Naive thymus-derived CD4-positive, alpha-beta T cell (primary cell): ENCODE measurements at regions of chr19 and their contacts with region 1.

Region 1: DNA sequence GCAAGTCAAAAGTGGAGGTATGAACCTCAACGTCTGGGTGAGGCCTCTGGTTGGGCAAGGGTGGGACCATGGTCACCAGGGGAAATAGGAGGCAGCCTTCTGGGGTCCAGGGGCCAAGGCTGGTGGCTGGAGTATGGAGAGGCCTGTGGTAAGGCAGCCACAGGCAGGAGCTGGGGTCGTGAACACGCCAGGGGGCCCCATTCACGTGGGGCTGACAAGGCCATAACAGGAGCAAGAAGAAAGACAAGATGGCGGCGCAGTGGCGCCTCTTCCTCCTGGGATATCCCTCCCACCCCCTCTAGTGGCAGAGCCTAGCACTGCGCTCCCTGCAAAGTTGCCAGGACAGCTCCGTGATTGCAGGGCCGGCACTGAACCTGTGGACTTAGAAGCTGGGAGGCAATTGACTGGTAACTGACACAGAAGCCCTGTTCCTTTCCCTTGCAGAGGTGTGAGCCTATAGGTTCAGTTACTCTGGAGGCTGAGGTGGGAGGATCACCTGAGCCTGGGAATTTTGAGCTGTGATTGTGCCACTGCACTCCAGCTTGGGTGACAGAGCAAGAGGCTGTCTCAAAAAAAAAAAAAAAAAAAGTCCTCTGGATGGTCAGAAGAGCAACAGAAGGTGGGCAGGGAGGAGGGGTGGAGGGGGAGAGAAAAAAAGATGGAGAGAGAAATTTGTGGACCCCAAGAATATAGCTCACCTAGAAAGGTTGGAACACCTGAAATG is 19.7 kb upstream of the EDDM13 start:
- DNase-seq: peak; percentile 30 to 69 (median 55)
- ATAC-seq: peak; percentile 82
- H3K4me3 ChIP-seq: no peak overlapping the region
- H3K4me3 Mint-ChIP-seq: no peak overlapping the region
- H3K27ac ChIP-seq: no peak overlapping the region
- H3K27ac Mint-ChIP-seq: no peak overlapping the region
- H3K4me1 ChIP-seq: no peaks in the 10 kb centered on the region
- H3K4me1 Mint-ChIP-seq: peaks cover 0 to 8% (median 0%) of the 10 kb centered on the region in 7 donors
- H3K27me3 ChIP-seq: no peaks in the 10 kb centered on the region
- H3K27me3 Mint-ChIP-seq: no peaks in the 10 kb centered on the region

Region 2: GRCh38 chr19:55553217-55554182 is 699.4 kb before region 1 on chr19:
- CTCF ChIA-PET with region 1: no interaction called
- POLR2A ChIA-PET with region 1: no interaction called
- intact Hi-C with region 1: no loop called
- DNase-seq: no peak
- ATAC-seq: no peak
- H3K4me3 ChIP-seq: no peak overlapping the region
- H3K4me3 Mint-ChIP-seq: no peak overlapping the region
- H3K27ac ChIP-seq: no peak overlapping the region
- H3K27ac Mint-ChIP-seq: no peak overlapping the region
- H3K4me1 ChIP-seq: no peaks in the 10 kb centered on the region
- H3K4me1 Mint-ChIP-seq: peaks cover 0 to 2% (median 0%) of the 10 kb centered on the region in 7 donors
- H3K27me3 ChIP-seq: no peaks in the 10 kb centered on the region
- H3K27me3 Mint-ChIP-seq: peaks cover 0 to 14% (median 5%) of the 10 kb centered on the region in 5 donors

Region 3: DNA sequence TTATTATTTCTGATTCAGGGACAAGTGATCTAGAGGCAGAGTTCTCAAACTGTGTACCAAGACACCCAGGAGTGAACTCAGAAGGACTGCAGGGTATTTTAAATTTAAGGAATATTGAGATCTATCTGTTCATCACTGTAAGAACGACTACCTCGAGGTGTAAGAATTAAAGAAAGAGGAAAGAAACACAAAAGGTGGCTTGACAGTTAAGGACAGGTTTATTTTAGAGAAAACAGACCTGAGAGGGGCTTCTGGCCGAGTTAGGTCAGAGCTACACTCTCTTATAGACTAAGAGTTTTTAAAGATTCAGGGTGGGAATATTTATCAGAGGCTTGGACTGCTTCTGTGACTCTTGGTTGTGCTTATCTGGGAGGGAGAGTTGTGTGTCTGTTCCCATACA is 278.9 kb before region 1 on chr19:
- CTCF ChIA-PET with region 1: no interaction called
- POLR2A ChIA-PET with region 1: no interaction called
- intact Hi-C with region 1: no loop called
- DNase-seq: no peak
- ATAC-seq: no peak
- H3K4me3 ChIP-seq: no peak overlapping the region
- H3K4me3 Mint-ChIP-seq: no peak overlapping the region
- H3K27ac ChIP-seq: no peak overlapping the region
- H3K27ac Mint-ChIP-seq: no peak overlapping the region
- H3K4me1 ChIP-seq: no peaks in the 10 kb centered on the region
- H3K4me1 Mint-ChIP-seq: no peaks in the 10 kb centered on the region
- H3K27me3 ChIP-seq: no peaks in the 10 kb centered on the region
- H3K27me3 Mint-ChIP-seq: peaks cover 0 to 17% (median 6%) of the 10 kb centered on the region in 5 donors

Region 4: GRCh38 chr19:56066152-56067023 is 186.5 kb before region 1 on chr19:
- CTCF ChIA-PET with region 1: interaction called, 3 read pairs
- POLR2A ChIA-PET with region 1: no interaction called
- intact Hi-C with region 1: loop called (anchors 2 to 5 kb)
- DNase-seq: peak; percentile 38 to 67 (median 58)
- ATAC-seq: peak; percentile 74
- H3K4me3 ChIP-seq: peak overlapping the region; percentile 38
- H3K4me3 Mint-ChIP-seq: peak overlapping the region; percentile 44 to 80 (median 74)
- H3K27ac ChIP-seq: no peak overlapping the region
- H3K27ac Mint-ChIP-seq: peak overlapping the region in 1 of 9 donors; percentile 17
- H3K4me1 ChIP-seq: no peaks in the 10 kb centered on the region
- H3K4me1 Mint-ChIP-seq: peaks cover 4 to 14% (median 12%) of the 10 kb centered on the region in 7 donors
- H3K27me3 ChIP-seq: no peaks in the 10 kb centered on the region
- H3K27me3 Mint-ChIP-seq: peaks cover 0 to 45% (median 38%) of the 10 kb centered on the region in 5 donors

Region 5: DNA sequence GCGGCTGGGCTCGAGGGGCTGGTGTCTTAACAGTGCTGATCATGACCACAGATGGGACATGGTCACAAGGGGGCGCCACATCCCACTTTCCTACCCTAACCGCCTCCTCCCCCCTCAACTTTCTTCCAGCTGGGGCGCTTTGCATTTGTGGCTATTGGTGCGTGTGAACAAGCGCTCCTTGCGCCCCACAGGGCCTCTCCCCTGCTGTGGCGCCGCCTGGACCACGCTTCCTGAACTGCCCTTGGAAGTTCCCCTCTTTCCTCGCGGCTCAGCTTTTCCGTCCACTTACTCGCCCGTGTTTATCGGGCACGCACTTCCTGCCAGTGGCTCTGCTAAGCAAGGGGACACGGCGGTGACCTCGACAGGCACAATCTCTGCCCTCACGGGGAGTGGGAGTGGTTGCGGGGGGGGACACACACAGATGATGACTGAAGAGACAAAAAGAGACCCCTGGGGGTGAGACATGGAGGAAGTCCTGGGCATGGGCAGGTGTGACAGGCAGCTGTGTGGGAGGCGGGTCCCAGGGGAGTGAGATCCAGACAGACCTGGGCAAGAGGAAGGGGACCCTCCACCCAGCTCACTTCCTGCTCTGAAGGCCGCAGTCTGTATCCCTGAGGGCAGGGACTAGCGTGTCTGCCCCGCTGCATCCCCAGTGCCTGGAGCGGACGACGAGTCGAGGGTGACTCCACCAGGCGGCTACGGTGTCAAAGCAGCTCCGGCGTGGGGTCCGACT is 172.0 kb before region 1 on chr19:
- CTCF ChIA-PET with region 1: interaction called, 4 read pairs
- POLR2A ChIA-PET with region 1: no interaction called
- intact Hi-C with region 1: loop called in 1 of 2 experiments (anchors 1 kb)
- DNase-seq: peak; percentile 22 to 69 (median 47)
- ATAC-seq: peak; percentile 81
- H3K4me3 ChIP-seq: peak overlapping the region; percentile 58
- H3K4me3 Mint-ChIP-seq: peak overlapping the region; percentile 70 to 89 (median 80)
- H3K27ac ChIP-seq: no peak overlapping the region
- H3K27ac Mint-ChIP-seq: peak overlapping the region in 1 of 9 donors; percentile 31
- H3K4me1 ChIP-seq: peaks cover 7 to 8% of the 10 kb centered on the region in 2 donors
- H3K4me1 Mint-ChIP-seq: peaks cover 8 to 11% (median 11%) of the 10 kb centered on the region in 7 donors
- H3K27me3 ChIP-seq: no peaks in the 10 kb centered on the region
- H3K27me3 Mint-ChIP-seq: peaks cover 4 to 13% (median 10%) of the 10 kb centered on the region in 5 donors

Region 6: GRCh38 chr19:56270676-56271075 is 17.8 kb after region 1 on chr19:
- CTCF ChIA-PET with region 1: interaction called, 11 read pairs
- POLR2A ChIA-PET with region 1: no interaction called
- intact Hi-C with region 1: no loop called
- DNase-seq: no peak
- ATAC-seq: peak; percentile 91
- H3K4me3 ChIP-seq: no peak overlapping the region
- H3K4me3 Mint-ChIP-seq: no peak overlapping the region
- H3K27ac ChIP-seq: no peak overlapping the region
- H3K27ac Mint-ChIP-seq: no peak overlapping the region
- H3K4me1 ChIP-seq: no peaks in the 10 kb centered on the region
- H3K4me1 Mint-ChIP-seq: peaks cover 0 to 9% (median 0%) of the 10 kb centered on the region in 7 donors
- H3K27me3 ChIP-seq: no peaks in the 10 kb centered on the region
- H3K27me3 Mint-ChIP-seq: no peaks in the 10 kb centered on the region

Region 7: DNA sequence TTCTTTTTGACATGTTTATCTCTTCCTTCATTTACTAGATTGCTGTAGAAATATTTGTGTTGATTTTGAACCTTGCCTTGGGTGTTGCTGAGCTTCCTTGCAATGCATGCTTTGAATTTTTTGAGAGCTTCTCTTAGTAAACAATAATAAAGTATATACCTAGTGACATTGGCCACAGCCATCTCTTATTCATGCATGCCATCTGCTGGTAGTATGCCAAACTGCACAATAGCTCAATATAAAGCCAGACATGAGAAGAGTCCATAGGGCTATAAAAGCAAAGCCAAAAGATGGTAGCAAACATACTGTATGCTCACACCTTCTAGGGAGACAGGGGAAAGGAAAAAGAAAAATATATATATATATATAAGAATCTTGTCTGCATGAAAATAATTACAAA is 80.6 kb after region 1 on chr19:
- CTCF ChIA-PET with region 1: interaction called, 36 read pairs
- POLR2A ChIA-PET with region 1: no interaction called
- intact Hi-C with region 1: loop called (anchors 1 kb)
- DNase-seq: peak in 5 of 9 donors; percentile 13 to 43 (median 32)
- ATAC-seq: peak; percentile 76
- H3K4me3 ChIP-seq: no peak overlapping the region
- H3K4me3 Mint-ChIP-seq: no peak overlapping the region
- H3K27ac ChIP-seq: no peak overlapping the region
- H3K27ac Mint-ChIP-seq: no peak overlapping the region
- H3K4me1 ChIP-seq: no peaks in the 10 kb centered on the region
- H3K4me1 Mint-ChIP-seq: no peaks in the 10 kb centered on the region
- H3K27me3 ChIP-seq: no peaks in the 10 kb centered on the region
- H3K27me3 Mint-ChIP-seq: peaks cover 0 to 9% (median 4%) of the 10 kb centered on the region in 5 donors

Region 8: DNA sequence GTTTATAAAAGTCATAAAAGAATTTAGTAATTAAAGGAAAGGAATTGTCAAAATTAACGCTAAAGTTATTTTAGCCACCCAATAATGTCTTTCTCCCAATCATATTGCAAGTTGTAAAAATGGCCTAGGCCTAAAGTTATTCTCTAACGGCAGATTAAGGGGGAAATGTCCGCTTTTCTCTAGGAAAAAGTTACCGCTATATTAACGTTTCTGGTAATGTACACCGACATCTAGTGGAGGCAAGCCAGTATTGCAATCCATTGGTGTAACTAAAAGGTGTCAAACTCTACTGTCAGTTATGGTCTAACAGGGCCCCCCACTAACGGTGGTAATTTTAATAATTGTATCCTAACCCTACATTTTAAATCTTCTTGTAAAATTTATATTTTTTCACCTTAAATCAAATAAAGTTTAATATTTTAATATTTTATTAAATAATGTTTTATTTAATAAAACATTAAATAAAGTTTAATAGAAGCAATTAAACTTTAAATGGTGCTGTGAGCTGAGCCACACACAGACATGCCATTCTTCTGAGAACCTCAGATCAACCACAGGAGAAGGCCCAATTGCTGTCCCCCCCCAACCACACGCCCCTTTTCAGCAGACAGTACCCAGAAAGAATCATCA is 97.7 kb after region 1 on chr19:
- CTCF ChIA-PET with region 1: interaction called, 7 read pairs
- POLR2A ChIA-PET with region 1: interaction called, 3 read pairs
- intact Hi-C with region 1: loop called (anchors 1 to 5 kb)
- DNase-seq: peak in 8 of 9 donors; percentile 21 to 61 (median 46)
- ATAC-seq: peak; percentile 70
- H3K4me3 ChIP-seq: no peak overlapping the region
- H3K4me3 Mint-ChIP-seq: no peak overlapping the region
- H3K27ac ChIP-seq: no peak overlapping the region
- H3K27ac Mint-ChIP-seq: peak overlapping the region in 1 of 9 donors; percentile 44
- H3K4me1 ChIP-seq: no peaks in the 10 kb centered on the region
- H3K4me1 Mint-ChIP-seq: peaks cover 0 to 5% (median 0%) of the 10 kb centered on the region in 7 donors
- H3K27me3 ChIP-seq: no peaks in the 10 kb centered on the region
- H3K27me3 Mint-ChIP-seq: no peaks in the 10 kb centered on the region